WTC11 (cell line): ENCODE measurements at regions of chr7 and their contacts with region 1.

Region 1: GRCh38 chr7:90708841-90709317 is 112.8 kb downstream of the CDK14 start:
- DNase-seq: peak; percentile 42
- ATAC-seq: peak; percentile 78
- H3K4me3 Mint-ChIP-seq: no peak overlapping the region
- H3K27ac Mint-ChIP-seq: no peak overlapping the region; the same call in 1 of the 2 replicates
- H3K4me1 Mint-ChIP-seq: peaks cover 71% of the 10 kb centered on the region
- H3K27me3 Mint-ChIP-seq: no peaks in the 10 kb centered on the region
- CTCF ChIP-seq: peak; percentile 80

Region 2: GRCh38 chr7:90720984-90721760 is 12.3 kb after region 1 on chr7:
- CTCF ChIA-PET with region 1: interaction called, 16 read pairs
- POLR2A ChIA-PET with region 1: no interaction called
- DNase-seq: no peak
- ATAC-seq: peak; percentile 59
- H3K4me3 Mint-ChIP-seq: no peak overlapping the region
- H3K27ac Mint-ChIP-seq: no peak overlapping the region
- H3K4me1 Mint-ChIP-seq: peaks cover 33% of the 10 kb centered on the region
- H3K27me3 Mint-ChIP-seq: no peaks in the 10 kb centered on the region
- CTCF ChIP-seq: no peak